ENCODE measurements at regions of chr20 and their contacts with region 1.

Region 1: DNA sequence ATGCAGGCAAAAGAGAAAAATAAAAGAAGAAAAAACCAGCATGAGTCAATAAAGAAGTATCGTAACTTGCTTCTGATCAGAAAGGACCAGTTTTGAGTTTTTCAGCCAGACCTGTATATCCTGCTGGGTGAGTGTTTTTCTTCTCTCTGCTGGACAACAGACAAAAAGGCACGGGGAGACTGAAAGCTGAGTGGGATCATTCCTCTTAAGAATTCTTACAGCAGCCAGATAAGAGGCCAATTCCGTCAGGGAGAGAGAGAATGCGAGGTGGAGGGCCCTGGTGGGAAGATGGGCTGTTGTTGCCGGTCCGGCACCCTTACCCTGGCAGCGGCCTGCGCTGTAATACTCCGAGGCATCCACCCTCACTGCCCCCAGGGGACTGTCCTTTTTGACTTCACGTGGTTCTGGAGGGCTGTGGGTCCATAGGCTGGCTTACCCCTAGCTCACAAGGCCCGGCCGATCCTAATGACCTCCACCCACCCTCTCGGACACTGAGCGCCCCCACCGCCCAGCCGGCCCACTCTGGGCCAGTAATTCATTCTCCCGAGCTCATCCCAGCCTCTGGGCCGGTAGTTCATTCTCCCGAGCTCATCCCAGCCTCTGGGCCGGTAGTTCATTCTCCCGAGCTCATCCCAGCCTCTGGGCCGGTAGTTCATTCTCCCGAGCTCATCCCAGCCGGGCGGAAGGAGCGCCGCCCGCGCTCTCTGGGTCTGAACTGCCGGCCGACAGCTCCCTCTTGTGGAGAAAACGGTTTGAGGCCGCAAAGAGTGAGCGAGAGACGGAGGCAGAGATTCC is 118.3 kb upstream of the SIRPA start:
- DNase-seq: peak; percentile 87
- ATAC-seq: peak; percentile 92
- H3K4me3 ChIP-seq: peak overlapping the region in 4 of 5 experiments; percentile 64 to 95 (median 74)
- H3K4me3 Mint-ChIP-seq: peak overlapping the region; percentile 93
- H3K27ac ChIP-seq: peak overlapping the region; percentile 32 to 66
- H3K27ac Mint-ChIP-seq: peak overlapping the region; percentile 65
- H3K4me1 ChIP-seq: peaks cover 11 to 13% of the 10 kb centered on the region in 2 donors
- H3K4me1 Mint-ChIP-seq: peaks cover 16% of the 10 kb centered on the region
- H3K27me3 ChIP-seq: peaks cover 0 to 10% (median 2%) of the 10 kb centered on the region in 4 experiments
- H3K27me3 Mint-ChIP-seq: peaks cover 16% of the 10 kb centered on the region
- CTCF ChIP-seq: peak; percentile 78

Region 2: GRCh38 chr20:1509237-1509636 is 267.6 kb before region 1 on chr20:
- CTCF ChIA-PET with region 1: interaction called, 18 read pairs
- POLR2A ChIA-PET with region 1: no interaction called
- intact Hi-C with region 1: no loop called
- DNase-seq: peak; percentile 39
- ATAC-seq: peak; percentile 28
- H3K4me3 ChIP-seq: no peak overlapping the region
- H3K4me3 Mint-ChIP-seq: no peak overlapping the region
- H3K27ac ChIP-seq: no peak overlapping the region
- H3K27ac Mint-ChIP-seq: no peak overlapping the region
- H3K4me1 ChIP-seq: no peaks in the 10 kb centered on the region
- H3K4me1 Mint-ChIP-seq: no peaks in the 10 kb centered on the region
- H3K27me3 ChIP-seq: peaks cover 0 to 15% (median 0%) of the 10 kb centered on the region in 4 experiments
- H3K27me3 Mint-ChIP-seq: peaks cover 41% of the 10 kb centered on the region
- CTCF ChIP-seq: peak; percentile 41

Region 3: GRCh38 chr20:1764136-1765033 is 12.5 kb before region 1 on chr20:
- CTCF ChIA-PET with region 1: interaction called, 50 read pairs
- POLR2A ChIA-PET with region 1: no interaction called
- intact Hi-C with region 1: loop called (anchors 1 kb)
- DNase-seq: peak; percentile 77
- ATAC-seq: peak; percentile 79
- H3K4me3 ChIP-seq: no peak overlapping the region
- H3K4me3 Mint-ChIP-seq: no peak overlapping the region
- H3K27ac ChIP-seq: no peak overlapping the region
- H3K27ac Mint-ChIP-seq: no peak overlapping the region
- H3K4me1 ChIP-seq: no peaks in the 10 kb centered on the region
- H3K4me1 Mint-ChIP-seq: peaks cover 1% of the 10 kb centered on the region
- H3K27me3 ChIP-seq: peaks cover 0 to 3% (median 0%) of the 10 kb centered on the region in 4 experiments
- H3K27me3 Mint-ChIP-seq: peaks cover 13% of the 10 kb centered on the region
- CTCF ChIP-seq: peak; percentile 87

Region 4: DNA sequence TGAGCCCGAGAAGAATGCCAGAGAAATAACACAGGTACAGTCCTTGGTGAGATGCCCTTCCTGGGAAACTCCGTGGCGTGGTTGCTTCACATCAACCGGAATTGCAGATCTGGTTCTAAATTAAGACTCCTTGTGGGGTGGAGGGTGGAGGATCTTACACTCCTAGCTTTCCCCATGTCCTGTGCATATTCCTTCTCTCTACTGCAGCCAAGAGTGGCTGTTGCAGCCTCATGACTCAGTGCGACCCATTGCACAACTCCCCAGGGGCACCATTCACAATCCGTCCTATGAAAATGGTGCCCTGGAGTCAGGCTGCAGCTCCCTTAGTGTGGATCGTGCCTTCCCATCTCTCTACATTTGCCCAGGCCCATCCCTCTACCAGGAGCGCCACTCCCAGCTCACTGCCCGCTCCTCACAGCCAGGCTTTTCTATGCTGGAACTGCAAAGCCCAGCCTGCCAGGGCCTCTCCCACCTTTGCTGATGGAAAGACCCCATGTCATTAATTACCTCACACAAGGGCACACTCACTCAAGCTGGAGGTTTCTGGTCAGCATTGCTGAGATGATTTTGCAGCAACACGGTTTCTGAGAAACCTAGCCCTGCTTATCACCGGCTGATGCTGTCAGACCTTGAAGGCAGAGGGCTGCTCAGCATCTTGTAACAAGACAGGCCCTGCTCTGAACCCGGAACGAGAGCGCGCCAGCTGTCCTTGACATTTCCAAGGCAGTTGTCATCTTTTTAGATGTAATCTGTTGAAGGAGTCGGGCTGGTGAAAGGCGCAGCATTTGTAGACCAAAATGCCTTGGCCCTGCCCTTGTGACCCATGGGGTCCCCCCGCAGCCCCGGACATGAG is 158.1 kb after region 1 on chr20:
- CTCF ChIA-PET with region 1: no interaction called
- POLR2A ChIA-PET with region 1: no interaction called
- intact Hi-C with region 1: no loop called
- DNase-seq: no peak
- ATAC-seq: no peak
- H3K4me3 ChIP-seq: no peak overlapping the region
- H3K4me3 Mint-ChIP-seq: no peak overlapping the region
- H3K27ac ChIP-seq: no peak overlapping the region
- H3K27ac Mint-ChIP-seq: no peak overlapping the region
- H3K4me1 ChIP-seq: no peaks in the 10 kb centered on the region
- H3K4me1 Mint-ChIP-seq: no peaks in the 10 kb centered on the region
- H3K27me3 ChIP-seq: no peaks in the 10 kb centered on the region
- H3K27me3 Mint-ChIP-seq: no peaks in the 10 kb centered on the region
- CTCF ChIP-seq: no peak

Region 5: GRCh38 chr20:1965520-1966351 is 188.9 kb after region 1 on chr20:
- CTCF ChIA-PET with region 1: interaction called, 13 read pairs
- POLR2A ChIA-PET with region 1: no interaction called
- intact Hi-C with region 1: no loop called
- DNase-seq: peak; percentile 87
- ATAC-seq: peak; percentile 88
- H3K4me3 ChIP-seq: peak overlapping the region; percentile 9 to 57 (median 42)
- H3K4me3 Mint-ChIP-seq: peak overlapping the region; percentile 50
- H3K27ac ChIP-seq: no peak overlapping the region
- H3K27ac Mint-ChIP-seq: no peak overlapping the region
- H3K4me1 ChIP-seq: peaks cover 16 to 18% of the 10 kb centered on the region in 2 donors
- H3K4me1 Mint-ChIP-seq: peaks cover 18% of the 10 kb centered on the region
- H3K27me3 ChIP-seq: no peaks in the 10 kb centered on the region
- H3K27me3 Mint-ChIP-seq: peaks cover 2% of the 10 kb centered on the region
- CTCF ChIP-seq: peak; percentile 93

Region 6: DNA sequence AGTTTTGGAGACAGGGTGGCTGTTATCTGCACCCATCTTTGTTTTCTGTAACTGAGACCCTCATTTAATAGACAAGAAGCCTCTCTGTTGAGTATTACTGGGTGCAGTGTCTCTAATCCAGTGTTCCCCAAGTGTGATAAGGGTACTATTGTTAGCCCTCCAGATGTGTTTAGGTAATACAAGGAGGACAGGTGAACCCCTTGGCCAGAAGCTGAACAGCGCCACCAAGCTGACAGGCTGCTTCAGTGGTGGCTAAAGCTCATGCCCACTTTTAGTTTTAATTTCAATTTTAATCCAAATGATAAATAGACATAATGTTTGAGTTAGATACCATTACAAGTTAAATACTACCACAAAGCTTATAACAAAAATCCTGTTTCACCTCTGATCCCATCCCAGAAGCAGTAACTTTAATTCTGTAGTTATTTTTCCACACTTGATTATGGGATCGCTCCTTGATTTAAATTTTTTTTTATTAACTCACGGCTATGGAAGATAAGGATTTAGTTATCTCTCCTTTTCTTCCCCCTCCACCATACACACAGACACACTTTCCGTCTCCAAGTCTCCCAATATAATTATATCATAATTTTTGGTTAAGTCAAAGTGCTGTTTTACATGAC is 316.4 kb after region 1 on chr20:
- CTCF ChIA-PET with region 1: interaction called, 12 read pairs
- POLR2A ChIA-PET with region 1: no interaction called
- intact Hi-C with region 1: loop called (anchors 1 kb)
- DNase-seq: peak; percentile 51
- ATAC-seq: no peak
- H3K4me3 ChIP-seq: no peak overlapping the region
- H3K4me3 Mint-ChIP-seq: no peak overlapping the region
- H3K27ac ChIP-seq: no peak overlapping the region
- H3K27ac Mint-ChIP-seq: no peak overlapping the region
- H3K4me1 ChIP-seq: no peaks in the 10 kb centered on the region
- H3K4me1 Mint-ChIP-seq: peaks cover 2% of the 10 kb centered on the region
- H3K27me3 ChIP-seq: peaks cover 0 to 23% (median 7%) of the 10 kb centered on the region in 4 experiments
- H3K27me3 Mint-ChIP-seq: peaks cover 46% of the 10 kb centered on the region
- CTCF ChIP-seq: peak; percentile 77

Region 7: DNA sequence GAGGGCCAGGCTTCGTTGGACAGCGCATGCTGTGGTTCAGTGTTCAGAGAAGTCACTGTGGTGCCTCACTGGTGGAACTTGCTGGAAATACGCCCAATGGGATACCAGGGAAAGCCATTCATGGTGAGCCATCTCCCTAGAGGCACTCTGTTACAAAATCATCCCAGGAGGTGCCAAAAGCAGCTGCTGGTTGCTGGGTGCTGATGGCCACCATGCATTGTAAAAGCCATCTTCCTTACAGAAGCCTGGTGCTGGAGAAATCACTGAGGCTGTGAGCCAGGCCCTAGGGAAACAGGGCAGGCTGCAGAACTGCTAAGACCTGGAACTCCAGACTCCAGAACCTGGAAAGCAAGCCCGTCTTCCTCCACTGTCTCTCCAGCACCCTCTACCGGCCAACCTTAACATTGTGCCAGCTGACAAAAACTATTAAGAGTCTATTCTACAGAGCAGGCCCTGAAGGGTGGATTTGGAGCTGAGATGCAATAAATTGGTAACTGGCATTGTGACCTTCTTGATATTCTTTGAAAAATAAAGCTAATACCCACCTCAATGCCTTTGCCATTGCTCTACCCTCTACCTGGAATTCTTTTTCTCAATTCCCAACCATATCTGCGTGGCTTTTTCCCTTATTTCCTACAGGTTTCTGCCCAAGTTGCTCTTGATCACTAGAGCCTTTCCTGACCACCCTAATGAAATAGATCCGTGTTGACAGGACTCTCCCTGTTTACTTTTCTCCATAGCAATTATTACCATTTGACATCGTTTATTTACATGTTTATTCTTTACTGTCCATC is 675.3 kb after region 1 on chr20:
- CTCF ChIA-PET with region 1: interaction called, 11 read pairs
- POLR2A ChIA-PET with region 1: no interaction called
- intact Hi-C with region 1: no loop called
- DNase-seq: peak; percentile 63
- ATAC-seq: peak; percentile 53
- H3K4me3 ChIP-seq: no peak overlapping the region
- H3K4me3 Mint-ChIP-seq: no peak overlapping the region
- H3K27ac ChIP-seq: no peak overlapping the region
- H3K27ac Mint-ChIP-seq: no peak overlapping the region
- H3K4me1 ChIP-seq: no peaks in the 10 kb centered on the region
- H3K4me1 Mint-ChIP-seq: no peaks in the 10 kb centered on the region
- H3K27me3 ChIP-seq: no peaks in the 10 kb centered on the region
- H3K27me3 Mint-ChIP-seq: no peaks in the 10 kb centered on the region
- CTCF ChIP-seq: peak; percentile 83